AG04450 (cell line): ENCODE measurements at regions of chr1 and their contacts with region 1.

Region 1: GRCh38 chr1:2135441-2135841 is 59.1 kb downstream of the FAAP20 start:
- DNase-seq: no peak
- H3K4me3 ChIP-seq: no peak overlapping the region
- H3K27ac ChIP-seq: peak overlapping the region; percentile 31
- H3K27me3 ChIP-seq: peaks cover 6% of the 10 kb centered on the region
- CTCF ChIP-seq: no peak

Region 2: GRCh38 chr1:1922956-1923833 is 212.2 kb before region 1 on chr1:
- CTCF ChIA-PET with region 1: no interaction called
- POLR2A ChIA-PET with region 1: no interaction called
- DNase-seq: no peak
- H3K4me3 ChIP-seq: no peak overlapping the region
- H3K27ac ChIP-seq: no peak overlapping the region
- H3K27me3 ChIP-seq: peaks cover 2% of the 10 kb centered on the region
- CTCF ChIP-seq: no peak

Region 3: GRCh38 chr1:2055911-2056575 is 79.4 kb before region 1 on chr1:
- CTCF ChIA-PET with region 1: no interaction called
- POLR2A ChIA-PET with region 1: no interaction called
- DNase-seq: no peak
- H3K4me3 ChIP-seq: no peak overlapping the region
- H3K27ac ChIP-seq: no peak overlapping the region
- H3K27me3 ChIP-seq: peaks cover 12% of the 10 kb centered on the region
- CTCF ChIP-seq: no peak

Region 4: GRCh38 chr1:2148691-2149090 is 13.2 kb after region 1 on chr1:
- CTCF ChIA-PET with region 1: interaction called, 19 read pairs
- POLR2A ChIA-PET with region 1: no interaction called
- DNase-seq: no peak
- H3K4me3 ChIP-seq: no peak overlapping the region
- H3K27ac ChIP-seq: no peak overlapping the region
- H3K27me3 ChIP-seq: peaks cover 2% of the 10 kb centered on the region
- CTCF ChIP-seq: no peak

Region 5: DNA sequence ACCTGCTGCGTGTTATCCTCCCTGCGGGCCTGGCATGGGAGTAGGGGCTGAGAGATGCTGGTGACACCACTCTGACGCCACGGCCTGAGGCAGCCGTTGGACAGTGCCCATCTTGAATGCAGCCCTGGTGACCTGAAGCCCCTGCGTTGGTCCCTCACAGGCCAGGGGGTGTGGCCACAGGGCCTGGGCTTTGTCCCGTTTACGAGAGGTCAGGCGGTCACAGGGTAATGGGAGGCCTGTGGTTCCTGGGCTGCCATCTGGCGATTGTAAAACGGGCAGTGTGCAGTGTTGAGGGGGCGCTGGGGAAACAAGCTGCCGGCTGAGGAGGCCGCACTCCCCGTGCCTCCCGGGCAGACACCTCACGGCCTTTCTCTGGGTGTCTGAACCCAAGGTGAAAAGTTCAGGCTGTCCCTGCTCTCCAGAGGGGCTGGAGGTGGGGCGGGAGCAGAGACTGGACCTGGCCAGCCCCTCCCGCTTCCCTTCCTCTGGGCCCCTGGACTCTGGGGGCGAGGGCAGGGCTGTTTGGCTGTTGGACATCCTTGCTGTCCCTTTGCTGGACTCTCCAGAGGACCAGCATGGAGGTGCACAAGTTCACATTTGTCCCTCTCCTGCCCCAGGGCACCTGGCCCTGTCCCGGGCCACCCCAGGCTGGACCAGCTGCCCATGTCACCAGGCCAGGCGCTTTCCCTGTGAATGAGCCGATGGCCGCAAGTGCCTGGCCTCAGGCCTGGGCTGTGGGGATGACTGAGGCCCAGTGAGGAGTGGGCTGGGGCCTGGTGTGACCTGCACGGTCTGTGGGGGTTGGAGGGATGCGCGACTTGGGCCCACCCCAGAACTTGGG is 135.0 kb after region 1 on chr1:
- CTCF ChIA-PET with region 1: no interaction called
- POLR2A ChIA-PET with region 1: no interaction called
- DNase-seq: no peak
- H3K4me3 ChIP-seq: no peak overlapping the region
- H3K27ac ChIP-seq: no peak overlapping the region
- H3K27me3 ChIP-seq: no peaks in the 10 kb centered on the region
- CTCF ChIP-seq: no peak

Region 6: GRCh38 chr1:2345223-2346080 is 210.0 kb after region 1 on chr1:
- CTCF ChIA-PET with region 1: no interaction called
- POLR2A ChIA-PET with region 1: no interaction called
- DNase-seq: no peak
- H3K4me3 ChIP-seq: no peak overlapping the region
- H3K27ac ChIP-seq: no peak overlapping the region
- H3K27me3 ChIP-seq: peaks cover 2% of the 10 kb centered on the region
- CTCF ChIP-seq: no peak

Region 7: DNA sequence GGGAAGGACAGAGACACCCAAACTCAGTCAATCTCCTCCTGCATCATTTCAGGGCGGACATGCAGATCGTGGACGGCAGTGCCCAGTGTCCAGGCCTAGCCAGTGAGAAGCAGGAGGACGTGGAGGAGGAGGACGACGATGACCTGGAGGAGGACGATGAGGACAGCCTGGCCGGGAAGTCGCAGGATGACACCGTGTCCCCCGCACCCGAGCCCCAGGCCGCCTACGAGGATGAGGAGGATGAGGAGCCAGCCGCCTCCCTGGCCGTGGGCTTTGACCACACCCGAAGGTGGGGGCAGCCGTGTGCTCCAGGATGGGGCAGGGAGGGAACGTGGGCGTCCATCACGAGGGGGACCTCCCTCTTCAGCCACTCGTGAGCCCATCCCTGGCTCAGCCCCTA is 1295.4 kb after region 1 on chr1:
- CTCF ChIA-PET with region 1: interaction called, 15 read pairs
- POLR2A ChIA-PET with region 1: no interaction called
- DNase-seq: no peak
- H3K4me3 ChIP-seq: no peak overlapping the region
- H3K27ac ChIP-seq: no peak overlapping the region
- H3K27me3 ChIP-seq: no peaks in the 10 kb centered on the region
- CTCF ChIP-seq: no peak